SK-N-SH (cell line): ENCODE measurements at regions of chr13 and their contacts with region 1.

Region 1: DNA sequence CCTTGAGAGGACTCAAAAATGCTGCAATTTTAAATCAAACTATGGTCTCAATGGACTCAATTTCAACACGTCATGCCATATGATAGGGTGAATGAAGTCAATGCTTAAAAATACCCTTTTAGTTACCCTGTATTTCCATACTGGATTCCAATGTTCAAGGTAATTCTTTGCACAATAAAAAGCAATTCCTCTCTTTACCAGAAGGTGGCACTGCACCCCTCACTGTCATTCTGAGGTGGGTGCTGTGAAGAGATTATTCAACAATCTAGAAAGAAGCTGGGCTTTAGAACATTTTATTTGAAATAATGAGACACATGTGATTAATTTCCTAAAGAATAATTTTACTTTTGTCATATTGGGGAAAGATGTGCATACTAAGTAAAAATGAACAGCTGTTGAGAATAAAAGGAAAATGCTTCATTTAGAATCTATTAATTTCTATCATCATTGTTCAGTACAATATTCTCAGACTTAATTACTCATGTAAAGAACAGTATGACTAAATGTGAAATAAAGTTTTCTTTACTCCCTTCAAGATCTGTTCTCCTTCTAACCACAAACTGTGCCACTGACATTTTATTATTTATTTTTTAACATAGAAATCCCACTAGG is 789.1 kb downstream of the GPC5 start:
- DNase-seq: peak; percentile 64
- H3K4me3 ChIP-seq: peak overlapping the region in 1 of 2 experiments; percentile 28; a peak in 1 of 4 replicates
- H3K27ac ChIP-seq: no peak overlapping the region
- H3K4me1 ChIP-seq: no peaks in the 10 kb centered on the region
- H3K27me3 ChIP-seq: no peaks in the 10 kb centered on the region
- CTCF ChIP-seq: peak; percentile 94
- EP300 ChIP-seq: no peak
- RAD21 ChIP-seq: peak; percentile 93

Region 2: GRCh38 chr13:92218615-92219014 is 31.1 kb after region 1 on chr13:
- CTCF ChIA-PET with region 1: interaction called, 10 read pairs
- POLR2A ChIA-PET with region 1: no interaction called
- DNase-seq: no peak
- H3K4me3 ChIP-seq: no peak overlapping the region
- H3K27ac ChIP-seq: no peak overlapping the region
- H3K4me1 ChIP-seq: no peaks in the 10 kb centered on the region
- H3K27me3 ChIP-seq: no peaks in the 10 kb centered on the region
- CTCF ChIP-seq: no peak
- EP300 ChIP-seq: no peak
- RAD21 ChIP-seq: no peak

Region 3: GRCh38 chr13:92255526-92255925 is 68.0 kb after region 1 on chr13:
- CTCF ChIA-PET with region 1: no interaction called
- POLR2A ChIA-PET with region 1: no interaction called
- DNase-seq: no peak
- H3K4me3 ChIP-seq: no peak overlapping the region
- H3K27ac ChIP-seq: no peak overlapping the region
- H3K4me1 ChIP-seq: peaks cover 0 to 2% of the 10 kb centered on the region in 2 experiments; a peak in 2 of 4 replicates
- H3K27me3 ChIP-seq: no peaks in the 10 kb centered on the region
- CTCF ChIP-seq: no peak
- EP300 ChIP-seq: no peak
- RAD21 ChIP-seq: no peak

Region 4: GRCh38 chr13:92590503-92590908 is 403.0 kb after region 1 on chr13:
- CTCF ChIA-PET with region 1: no interaction called
- POLR2A ChIA-PET with region 1: no interaction called
- DNase-seq: no peak
- H3K4me3 ChIP-seq: no peak overlapping the region
- H3K27ac ChIP-seq: no peak overlapping the region
- H3K4me1 ChIP-seq: no peaks in the 10 kb centered on the region
- H3K27me3 ChIP-seq: no peaks in the 10 kb centered on the region
- CTCF ChIP-seq: no peak
- EP300 ChIP-seq: no peak
- RAD21 ChIP-seq: no peak